Heart left ventricle (tissue), 16 donors: ENCODE measurements at regions of chr6 and their contacts with region 1.

Region 1: GRCh38 chr6:168968228-168968627 is 285.4 kb downstream of the THBS2 start:
- DNase-seq: peak in 2 of 5 donors; percentile 41 to 43
- ATAC-seq: peak; percentile 72 to 94 (median 88)
- H3K4me3 ChIP-seq: no peak overlapping the region
- H3K27ac ChIP-seq: peak overlapping the region in 2 of 12 donors; percentile 25 to 51
- H3K4me1 ChIP-seq: peaks cover 0 to 17% (median 2%) of the 10 kb centered on the region in 12 donors
- H3K27me3 ChIP-seq: no peaks in the 10 kb centered on the region
- CTCF ChIP-seq: no peak
- POLR2A ChIP-seq: no peak

Region 2: DNA sequence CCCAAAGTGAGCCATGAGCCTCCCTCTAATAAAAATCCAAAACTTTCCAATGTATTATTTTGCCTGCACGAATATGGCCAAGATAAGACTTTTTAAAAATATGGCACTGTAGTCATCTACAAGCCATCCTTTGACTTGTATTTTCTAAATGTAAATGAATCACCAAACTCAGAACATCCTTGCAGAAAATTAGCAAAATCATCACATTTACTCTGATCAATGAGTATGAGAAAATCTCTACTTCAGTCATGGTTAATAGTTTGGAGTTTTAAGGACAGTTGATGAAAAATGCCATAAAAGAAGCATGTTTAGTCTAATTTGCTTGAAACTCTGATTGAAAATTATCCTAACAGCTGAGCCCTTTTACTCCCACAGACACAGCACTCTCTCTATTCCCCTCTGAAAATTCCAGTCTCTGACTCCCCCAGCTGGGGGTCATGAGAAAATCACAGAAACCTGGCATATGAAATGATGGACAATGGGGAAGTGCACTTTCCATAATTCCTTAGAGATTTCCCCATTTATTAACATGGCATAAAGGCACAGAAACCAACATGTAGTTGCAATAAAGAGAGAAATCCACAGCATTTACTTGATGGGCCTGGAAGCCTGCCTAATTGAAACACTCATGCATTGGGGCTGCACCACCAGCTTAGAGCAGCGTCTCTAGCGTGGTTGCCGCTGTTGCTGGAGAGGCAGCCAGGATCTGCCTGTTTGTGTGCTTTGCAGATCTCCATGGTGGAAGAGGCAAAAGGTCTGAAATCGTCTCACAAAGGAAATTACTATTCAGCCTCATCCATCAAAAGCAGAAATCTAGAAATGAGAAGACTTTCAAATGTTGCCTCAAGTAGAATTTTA is 519.6 kb after region 1 on chr6:
- intact Hi-C with region 1: loop called in 1 of 10 experiments (anchors 10 kb)
- DNase-seq: no peak
- ATAC-seq: no peak
- H3K4me3 ChIP-seq: no peak overlapping the region
- H3K27ac ChIP-seq: no peak overlapping the region
- H3K4me1 ChIP-seq: peaks cover 0 to 30% (median 6%) of the 10 kb centered on the region in 12 donors
- H3K27me3 ChIP-seq: no peaks in the 10 kb centered on the region
- CTCF ChIP-seq: peak in 6 of 12 donors; percentile 7 to 37 (median 25)
- POLR2A ChIP-seq: no peak